ENCODE measurements at regions of chr1 and their contacts with region 1.

Region 1: DNA sequence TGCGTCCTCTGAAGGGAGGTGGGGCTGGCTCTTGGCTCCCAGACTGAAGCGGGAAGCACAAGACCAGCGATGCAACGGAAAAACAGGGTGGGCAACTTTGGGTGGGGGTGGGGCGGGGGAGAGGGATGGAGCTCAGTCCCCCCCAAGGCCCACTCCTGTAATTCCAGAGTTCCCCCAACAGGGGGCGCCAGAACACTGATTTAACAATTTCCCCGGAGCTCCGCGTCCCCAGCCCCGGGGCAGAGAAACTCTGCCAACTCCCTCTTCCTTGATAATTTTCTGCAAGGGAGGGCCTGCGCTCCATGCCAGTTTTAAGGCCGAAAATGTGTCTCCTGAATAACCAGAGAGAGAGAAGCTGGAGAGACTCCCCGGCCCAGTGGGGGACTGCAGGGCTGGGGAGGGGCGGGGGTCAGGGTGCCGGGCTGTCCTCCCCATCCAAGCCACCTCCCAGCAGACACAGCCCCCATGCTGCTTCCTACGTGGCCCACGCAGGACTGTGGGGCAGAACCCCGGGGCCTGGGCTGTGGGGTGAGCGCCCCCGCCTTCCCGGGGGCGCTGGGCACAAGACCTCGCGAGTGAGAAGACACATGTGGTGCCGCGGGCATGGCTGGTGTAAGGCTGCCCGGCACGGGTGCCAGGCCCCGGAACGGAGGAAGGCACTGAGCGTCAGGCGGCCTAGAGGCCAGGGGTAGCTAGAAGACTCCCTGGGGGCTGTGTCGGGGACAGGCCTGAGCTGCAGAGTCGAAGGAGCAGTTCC is 51.4 kb downstream of the KIF21B start:
- DNase-seq: peak; percentile 83
- ATAC-seq: peak; percentile 57
- H3K4me3 Mint-ChIP-seq: no peak overlapping the region
- H3K27ac Mint-ChIP-seq: no peak overlapping the region
- H3K4me1 Mint-ChIP-seq: no peaks in the 10 kb centered on the region; the same call in 1 of the 2 replicates
- H3K27me3 Mint-ChIP-seq: no peaks in the 10 kb centered on the region
- CTCF ChIP-seq: peak; percentile 100

Region 2: GRCh38 chr1:200699871-200700270 is 272.3 kb before region 1 on chr1:
- CTCF ChIA-PET with region 1: no interaction called
- POLR2A ChIA-PET with region 1: no interaction called
- DNase-seq: no peak
- ATAC-seq: peak; percentile 78
- H3K4me3 Mint-ChIP-seq: no peak overlapping the region
- H3K27ac Mint-ChIP-seq: 0 out of 2 replicates have a peak overlapping the region, but pooled peaks have one; percentile 25
- H3K4me1 Mint-ChIP-seq: peaks cover 4% of the 10 kb centered on the region
- H3K27me3 Mint-ChIP-seq: no peaks in the 10 kb centered on the region
- CTCF ChIP-seq: no peak

Region 3: GRCh38 chr1:200896531-200897196 is 75.5 kb before region 1 on chr1:
- CTCF ChIA-PET with region 1: interaction called, 23 read pairs
- POLR2A ChIA-PET with region 1: no interaction called
- DNase-seq: no peak
- ATAC-seq: no peak; the same call in 1 of the 2 replicates
- H3K4me3 Mint-ChIP-seq: peak overlapping the region; percentile 36; the same call in 1 of the 2 replicates
- H3K27ac Mint-ChIP-seq: peak overlapping the region; percentile 86
- H3K4me1 Mint-ChIP-seq: peaks cover 61% of the 10 kb centered on the region
- H3K27me3 Mint-ChIP-seq: no peaks in the 10 kb centered on the region
- CTCF ChIP-seq: no peak

Region 4: GRCh38 chr1:200985481-200985880 is 13.3 kb after region 1 on chr1:
- CTCF ChIA-PET with region 1: interaction called, 18 read pairs
- POLR2A ChIA-PET with region 1: no interaction called
- DNase-seq: no peak
- ATAC-seq: no peak
- H3K4me3 Mint-ChIP-seq: no peak overlapping the region
- H3K27ac Mint-ChIP-seq: no peak overlapping the region
- H3K4me1 Mint-ChIP-seq: no peaks in the 10 kb centered on the region
- H3K27me3 Mint-ChIP-seq: no peaks in the 10 kb centered on the region; the same call in 1 of the 2 replicates
- CTCF ChIP-seq: no peak

Region 5: DNA sequence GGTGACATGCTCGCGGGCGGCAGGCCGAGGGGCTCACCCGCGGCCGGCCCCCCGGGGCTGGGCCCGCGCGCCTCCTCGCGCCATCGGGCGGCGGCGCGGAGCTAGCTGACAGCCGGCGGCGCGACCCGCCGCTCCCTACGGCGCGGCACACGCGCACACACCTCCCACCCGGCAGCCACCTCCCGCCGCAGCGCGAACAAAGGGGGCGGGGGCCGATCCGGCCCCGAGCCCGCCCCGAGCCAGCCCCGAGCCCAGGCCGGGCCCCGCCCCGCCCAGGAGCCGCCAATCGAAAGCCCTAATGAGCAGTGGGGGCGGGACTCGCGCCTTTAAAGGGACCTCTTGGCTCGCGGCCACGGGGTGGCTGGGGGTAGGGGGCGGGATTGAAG is 51.4 kb after region 1 on chr1 and contains the start of gene KIF21B:
- CTCF ChIA-PET with region 1: interaction called, 218 read pairs
- POLR2A ChIA-PET with region 1: no interaction called
- DNase-seq: peak; percentile 90
- ATAC-seq: peak; percentile 82
- H3K4me3 Mint-ChIP-seq: peak within 1 kb of the TSS; percentile 79
- H3K27ac Mint-ChIP-seq: no peak within 1 kb of the TSS
- H3K4me1 Mint-ChIP-seq: peaks cover 65% of the 10 kb centered on the region
- H3K27me3 Mint-ChIP-seq: peaks cover 7% of the 10 kb centered on the region
- CTCF ChIP-seq: no peak
- total RNA-seq, gene KIF21B: 17.8 to 19.4 TPM (median 18.0 TPM) in 3 replicates

Region 6: DNA sequence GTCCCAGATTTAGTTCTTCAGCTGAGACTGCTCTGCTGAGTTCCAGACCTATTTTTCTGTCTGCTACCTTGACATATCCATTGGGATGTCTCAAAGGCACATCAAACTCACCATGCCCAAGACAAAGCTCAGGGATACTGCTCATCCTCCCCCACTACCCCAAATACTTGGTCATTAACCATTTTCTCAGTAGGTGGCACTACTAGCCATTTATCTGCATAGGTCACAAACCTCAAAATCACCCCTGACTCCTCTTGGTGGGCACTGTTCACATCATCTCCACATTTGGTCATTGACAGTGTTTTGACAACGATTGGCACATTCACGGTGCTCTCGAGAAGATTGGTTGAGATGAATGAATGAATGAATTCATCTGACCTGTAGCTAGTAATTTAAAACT is 108.0 kb after region 1 on chr1:
- CTCF ChIA-PET with region 1: interaction called, 36 read pairs
- POLR2A ChIA-PET with region 1: no interaction called
- DNase-seq: no peak
- ATAC-seq: no peak
- H3K4me3 Mint-ChIP-seq: no peak overlapping the region
- H3K27ac Mint-ChIP-seq: no peak overlapping the region
- H3K4me1 Mint-ChIP-seq: no peaks in the 10 kb centered on the region; the same call in 1 of the 2 replicates
- H3K27me3 Mint-ChIP-seq: no peaks in the 10 kb centered on the region
- CTCF ChIP-seq: no peak

Region 7: DNA sequence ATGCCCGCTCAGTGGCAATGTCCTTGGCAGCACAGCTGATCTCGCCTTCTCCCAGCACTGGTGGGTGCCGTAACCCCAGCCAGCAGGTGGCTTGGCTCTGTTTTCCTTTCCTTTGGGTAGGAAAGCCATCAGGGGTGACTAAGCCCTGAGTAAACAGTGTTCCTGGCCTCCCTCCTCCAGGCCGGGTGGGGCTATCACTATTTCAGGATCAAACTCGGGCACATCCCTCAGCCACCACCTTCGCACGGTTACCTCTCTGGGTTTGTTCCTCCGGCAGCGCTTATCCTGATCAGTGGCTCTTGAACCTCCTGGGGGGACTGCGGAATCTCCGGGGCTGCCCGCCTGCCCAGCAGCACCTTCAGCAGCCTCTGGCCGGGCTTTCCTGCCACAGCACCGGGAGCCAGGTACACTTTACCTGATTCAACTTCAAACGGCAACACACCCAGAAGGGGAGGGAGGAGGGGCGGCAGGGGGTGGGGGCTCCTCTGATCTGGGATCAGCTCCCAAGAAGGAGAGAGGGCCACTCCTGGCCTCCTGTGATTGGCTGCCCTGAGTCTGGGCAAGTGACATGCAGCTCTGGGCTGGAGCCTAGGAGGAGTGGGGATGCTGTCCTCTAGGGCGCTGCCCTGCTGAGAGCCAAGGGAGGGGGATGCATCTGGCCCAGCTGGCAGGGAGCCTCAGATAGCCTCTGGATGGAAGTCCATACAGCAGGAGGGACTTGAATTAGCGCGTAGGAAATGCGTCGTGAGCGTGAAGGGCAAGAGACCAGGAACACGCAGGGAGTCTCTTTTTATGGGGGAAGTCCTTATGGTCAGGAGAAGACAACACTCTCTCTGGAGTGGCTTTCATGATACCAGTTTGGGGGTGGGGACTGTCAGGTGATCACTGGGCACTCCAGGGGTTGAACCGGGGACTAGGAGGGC is 155.0 kb after region 1 on chr1 and contains the start of gene ASCL5:
- CTCF ChIA-PET with region 1: interaction called, 14 read pairs
- POLR2A ChIA-PET with region 1: no interaction called
- DNase-seq: peak; percentile 57
- ATAC-seq: peak; percentile 92
- H3K4me3 Mint-ChIP-seq: no peak within 1 kb of the TSS
- H3K27ac Mint-ChIP-seq: no peak within 1 kb of the TSS
- H3K4me1 Mint-ChIP-seq: peaks cover 10% of the 10 kb centered on the region
- H3K27me3 Mint-ChIP-seq: peaks cover 2% of the 10 kb centered on the region; the same call in 1 of the 2 replicates
- CTCF ChIP-seq: no peak
- total RNA-seq, gene ASCL5: 0.18 to 0.53 TPM (median 0.31 TPM) in 3 replicates

Measured in WTC11 (cell line).